Natural killer cell (primary cell): ENCODE measurements at regions of chr10 and their contacts with region 1.

Region 1: DNA sequence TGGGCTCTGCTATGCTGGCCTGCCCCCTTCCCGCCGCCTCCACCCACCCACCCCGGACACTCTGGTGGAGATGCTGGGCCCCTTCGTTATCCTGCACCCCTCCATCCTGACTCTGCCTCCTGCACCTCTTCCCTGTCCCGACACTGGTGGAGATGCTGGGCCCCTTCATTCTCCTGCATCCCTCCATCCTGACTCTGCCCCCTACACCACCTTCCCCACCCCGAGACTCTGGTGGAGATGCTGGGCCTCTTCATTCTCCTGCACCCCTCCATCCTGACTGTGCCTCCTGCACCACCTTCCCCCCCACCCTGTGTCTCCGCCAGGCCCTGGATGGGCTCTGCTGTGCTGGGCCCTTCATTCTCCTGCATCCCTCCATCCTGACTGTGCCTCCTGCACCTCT is 15.0 kb downstream of the IDI2 start:
- DNase-seq: no peak
- ATAC-seq: no peak
- H3K4me3 ChIP-seq: no peak overlapping the region
- H3K4me3 Mint-ChIP-seq: no peak overlapping the region
- H3K27ac ChIP-seq: no peak overlapping the region
- H3K27ac Mint-ChIP-seq: peak overlapping the region in 1 of 2 donors; percentile 67
- H3K4me1 ChIP-seq: no peaks in the 10 kb centered on the region
- H3K4me1 Mint-ChIP-seq: peaks cover 0 to 39% of the 10 kb centered on the region in 2 donors
- H3K27me3 ChIP-seq: no peaks in the 10 kb centered on the region
- H3K27me3 Mint-ChIP-seq: no peaks in the 10 kb centered on the region
- CTCF ChIP-seq: no peak

Region 2: DNA sequence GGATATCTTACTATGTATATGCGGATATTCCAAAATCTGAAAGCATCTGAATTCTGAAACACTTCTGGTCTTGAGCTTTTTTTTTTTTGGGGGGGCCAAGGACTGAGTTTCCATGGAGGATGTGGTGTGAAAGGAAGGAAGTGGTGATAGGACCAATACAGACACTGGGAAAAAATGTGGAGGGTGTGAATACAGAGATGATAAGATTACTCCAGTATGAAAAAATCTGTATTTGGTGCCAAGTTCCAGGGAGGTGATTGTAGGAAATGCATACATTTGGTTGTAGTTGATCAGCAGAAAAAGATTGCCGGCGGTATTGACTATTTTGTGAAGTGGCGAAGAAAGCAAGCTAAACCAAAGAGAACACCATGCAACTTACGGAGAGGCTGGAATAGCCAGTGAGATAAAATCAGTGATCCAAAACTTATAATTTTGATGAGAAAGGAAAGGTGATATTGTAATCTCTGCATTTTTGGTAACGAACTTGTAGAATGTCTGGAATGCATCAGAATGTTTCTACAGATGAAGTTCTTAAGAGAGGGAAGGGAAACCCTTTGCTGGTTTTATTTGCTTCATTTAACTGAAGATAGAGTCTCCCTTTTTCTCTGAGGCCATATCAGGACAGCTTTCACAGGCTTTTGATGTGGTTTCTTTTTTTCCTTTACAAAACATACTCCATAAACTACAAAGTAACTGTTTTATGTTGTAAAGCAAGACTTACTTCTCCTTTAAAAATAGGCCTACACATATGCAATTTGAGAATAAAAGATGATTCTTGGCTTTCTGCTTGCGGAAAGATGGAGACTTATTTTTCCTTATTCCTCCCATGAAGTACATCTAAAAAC is 51.4 kb after region 1 on chr10:
- intact Hi-C with region 1: loop called (anchors 5 kb)
- DNase-seq: peak in 1 of 2 donors; percentile 28
- ATAC-seq: no peak
- H3K4me3 ChIP-seq: no peak overlapping the region
- H3K4me3 Mint-ChIP-seq: peak overlapping the region; percentile 76
- H3K27ac ChIP-seq: peak overlapping the region; percentile 74
- H3K27ac Mint-ChIP-seq: peak overlapping the region; percentile 88 to 89
- H3K4me1 ChIP-seq: peaks cover 69% of the 10 kb centered on the region
- H3K4me1 Mint-ChIP-seq: peaks cover 89 to 90% of the 10 kb centered on the region in 2 donors
- H3K27me3 ChIP-seq: no peaks in the 10 kb centered on the region
- H3K27me3 Mint-ChIP-seq: no peaks in the 10 kb centered on the region
- CTCF ChIP-seq: no peak